ENCODE measurements at regions of chr17 and their contacts with region 1.

Region 1: DNA sequence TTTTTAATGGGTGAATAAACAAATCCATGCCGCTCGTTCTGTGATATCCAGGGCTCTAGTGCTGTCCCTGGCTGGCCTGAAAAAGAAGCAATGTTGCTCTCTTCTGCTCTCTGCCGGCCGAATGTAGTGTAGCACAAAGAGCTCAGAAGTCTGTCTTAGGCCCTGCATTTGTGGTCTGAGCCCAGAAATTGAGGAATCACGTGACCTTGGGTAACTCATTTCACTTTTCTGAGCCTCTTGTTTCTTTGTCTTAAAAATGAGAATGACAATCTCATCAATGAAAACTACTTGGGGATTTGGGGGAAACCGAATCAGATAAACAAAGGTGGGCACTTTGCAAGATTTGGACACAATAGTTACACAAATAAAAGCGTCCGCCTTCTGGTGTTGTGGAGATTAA is 381.6 kb upstream of the ASIC2 start:
- DNase-seq: no peak

Region 2: GRCh38 chr17:33520426-33521330 is 154.0 kb before region 1 on chr17:
- intact Hi-C with region 1: loop called (anchors 5 kb)
- DNase-seq: no peak

Region 3: GRCh38 chr17:33615861-33616260 is 58.8 kb before region 1 on chr17:
- intact Hi-C with region 1: loop called (anchors 10 kb)
- DNase-seq: no peak

Measured in cardiac septum (tissue), 1 donor.